ENCODE measurements at regions of chr4 and their contacts with region 1.

Region 1: GRCh38 chr4:169159624-169160171 is 111.1 kb downstream of the SH3RF1 start:
- DNase-seq: peak; percentile 34
- H3K4me3 ChIP-seq: no peak overlapping the region
- H3K27ac ChIP-seq: peak overlapping the region; percentile 76
- H3K4me1 ChIP-seq: peaks cover 42% of the 10 kb centered on the region
- H3K27me3 ChIP-seq: no peaks in the 10 kb centered on the region
- CTCF ChIP-seq: no peak
- POLR2A ChIP-seq: no peak

Region 2: GRCh38 chr4:169147191-169147590 is 12.5 kb before region 1 on chr4:
- CTCF ChIA-PET with region 1: interaction called, 4 read pairs
- POLR2A ChIA-PET with region 1: no interaction called
- dilution Hi-C with region 1: no loop called
- intact Hi-C with region 1: loop called (anchors 1 kb)
- DNase-seq: peak; percentile 73
- H3K4me3 ChIP-seq: no peak overlapping the region
- H3K27ac ChIP-seq: peak overlapping the region; percentile 89
- H3K4me1 ChIP-seq: peaks cover 56% of the 10 kb centered on the region
- H3K27me3 ChIP-seq: no peaks in the 10 kb centered on the region
- CTCF ChIP-seq: no peak
- POLR2A ChIP-seq: no peak

Region 3: DNA sequence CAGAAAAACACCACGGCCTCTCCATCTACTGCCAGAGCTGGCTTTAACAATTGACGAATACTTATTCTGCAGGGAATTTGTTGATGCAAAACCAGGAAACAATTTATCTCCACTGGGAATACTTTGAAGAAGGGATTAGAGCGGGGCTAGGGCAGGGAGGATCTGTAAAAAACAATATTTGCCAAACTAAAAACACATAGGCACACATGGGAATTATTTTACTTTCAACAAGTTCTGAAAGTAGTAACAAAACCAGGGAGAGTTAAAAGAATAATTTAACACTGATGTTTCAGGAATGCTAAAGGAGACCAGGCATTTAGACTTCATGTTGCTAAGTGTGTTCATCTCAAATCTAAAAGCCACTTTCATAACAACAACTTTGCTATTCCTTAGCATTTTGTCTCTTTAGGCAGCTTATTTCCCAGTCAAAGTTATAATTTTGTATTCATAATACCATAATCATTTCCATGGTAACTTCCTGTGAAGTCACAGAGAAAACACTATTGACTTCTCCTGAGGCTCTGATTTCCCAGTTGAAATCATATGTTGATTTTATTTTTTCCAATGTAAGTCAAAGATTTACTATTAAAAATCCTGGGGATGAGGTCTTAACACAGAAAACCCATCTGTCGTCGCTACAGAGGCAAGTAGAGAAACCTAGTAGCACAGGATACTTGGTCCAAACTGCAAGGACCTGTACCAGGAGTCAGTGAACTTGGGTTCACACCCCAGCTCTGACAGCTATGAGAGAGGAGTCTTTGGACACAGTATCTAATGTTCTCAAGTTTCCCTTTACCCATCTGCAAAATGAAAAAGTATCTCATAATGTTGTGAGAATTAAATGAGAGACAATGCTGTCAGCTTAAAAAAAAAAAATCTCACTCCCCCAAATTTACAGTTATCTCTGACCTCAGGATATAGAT is 41.8 kb after region 1 on chr4:
- CTCF ChIA-PET with region 1: no interaction called
- POLR2A ChIA-PET with region 1: no interaction called
- dilution Hi-C with region 1: no loop called
- intact Hi-C with region 1: loop called (anchors 5 kb)
- DNase-seq: peak; percentile 76
- H3K4me3 ChIP-seq: peak overlapping the region in 1 of 3 experiments; percentile 12
- H3K27ac ChIP-seq: peak overlapping the region; percentile 86
- H3K4me1 ChIP-seq: peaks cover 18% of the 10 kb centered on the region
- H3K27me3 ChIP-seq: no peaks in the 10 kb centered on the region
- CTCF ChIP-seq: no peak
- POLR2A ChIP-seq: no peak

Region 4: GRCh38 chr4:169225058-169225751 is 65.5 kb after region 1 on chr4:
- CTCF ChIA-PET with region 1: no interaction called
- POLR2A ChIA-PET with region 1: no interaction called
- dilution Hi-C with region 1: no loop called
- intact Hi-C with region 1: loop called (anchors 2 kb)
- DNase-seq: peak; percentile 87
- H3K4me3 ChIP-seq: no peak overlapping the region
- H3K27ac ChIP-seq: peak overlapping the region; percentile 79
- H3K4me1 ChIP-seq: peaks cover 38% of the 10 kb centered on the region
- H3K27me3 ChIP-seq: no peaks in the 10 kb centered on the region
- CTCF ChIP-seq: no peak
- POLR2A ChIP-seq: no peak

Region 5: DNA sequence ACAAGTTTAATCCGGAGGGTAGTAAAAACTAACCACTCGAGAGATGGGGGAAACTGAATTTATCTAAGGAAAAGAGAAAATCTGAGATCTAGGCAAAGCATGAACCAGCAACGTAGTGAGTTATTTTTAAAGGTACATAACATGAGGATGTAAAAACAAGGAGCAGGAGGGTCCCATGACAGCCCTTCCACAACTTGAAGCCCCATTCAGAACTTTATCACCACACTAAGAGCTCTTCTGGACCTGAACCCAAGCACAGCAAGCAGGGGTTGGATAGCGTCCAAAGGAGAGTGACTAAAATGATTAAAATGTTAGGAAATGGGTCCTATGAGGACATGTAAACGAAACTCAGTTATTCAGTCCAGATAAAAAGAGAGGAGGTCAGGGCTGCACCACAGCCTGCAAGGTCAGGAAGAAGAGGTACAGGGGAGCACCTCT is 94.9 kb after region 1 on chr4:
- CTCF ChIA-PET with region 1: interaction called, 5 read pairs
- POLR2A ChIA-PET with region 1: interaction called, 3 read pairs
- dilution Hi-C with region 1: no loop called
- intact Hi-C with region 1: loop called (anchors 5 kb)
- DNase-seq: peak; percentile 89
- H3K4me3 ChIP-seq: peak overlapping the region in 1 of 3 experiments; percentile 21
- H3K27ac ChIP-seq: peak overlapping the region; percentile 53
- H3K4me1 ChIP-seq: peaks cover 98% of the 10 kb centered on the region
- H3K27me3 ChIP-seq: no peaks in the 10 kb centered on the region
- CTCF ChIP-seq: no peak
- POLR2A ChIP-seq: peak; percentile 41